Endothelial cell of umbilical vein (primary cell): ENCODE measurements at regions of chr3 and their contacts with region 1.

Region 1: DNA sequence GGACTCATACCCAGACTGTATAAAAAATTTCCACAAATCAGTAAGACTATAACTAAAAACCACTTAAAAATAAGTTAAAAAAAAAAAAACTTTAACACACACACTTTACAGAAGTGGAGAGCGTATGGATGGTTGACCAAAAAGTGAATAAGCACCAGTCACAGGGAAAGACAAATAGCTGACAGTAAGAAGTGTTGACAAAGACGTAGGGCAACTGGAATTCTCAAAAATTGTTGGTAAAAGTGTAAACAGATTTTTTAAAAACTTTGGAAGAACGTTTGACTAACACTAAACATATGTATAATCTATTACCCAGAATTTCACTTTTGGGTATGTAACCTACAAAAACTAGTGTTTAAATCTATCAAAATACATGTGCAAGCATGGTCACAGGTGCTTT is 73.7 kb downstream of the TMEM212 start:
- DNase-seq: no peak
- H3K4me3 ChIP-seq: no peak overlapping the region
- H3K27ac ChIP-seq: no peak overlapping the region
- H3K4me1 ChIP-seq: no peaks in the 10 kb centered on the region
- H3K27me3 ChIP-seq: no peaks in the 10 kb centered on the region
- CTCF ChIP-seq: no peak
- POLR2A ChIP-seq: no peak

Region 2: GRCh38 chr3:170908235-170909116 is 1008.4 kb before region 1 on chr3 and contains the start of gene EIF5A2:
- CTCF ChIA-PET with region 1: no interaction called
- POLR2A ChIA-PET with region 1: no interaction called
- dilution Hi-C with region 1: no loop called
- intact Hi-C with region 1: no loop called
- DNase-seq: peak; percentile 92
- H3K4me3 ChIP-seq: peak within 1 kb of the TSS; percentile 64 to 69 (median 68)
- H3K27ac ChIP-seq: peak within 1 kb of the TSS; percentile 22
- H3K4me1 ChIP-seq: peaks cover 12% of the 10 kb centered on the region
- H3K27me3 ChIP-seq: peaks cover 0 to 3% of the 10 kb centered on the region in 2 experiments
- CTCF ChIP-seq: no peak
- POLR2A ChIP-seq: peak; percentile 70
- total RNA-seq, gene EIF5A2: 10.9 and 12.3 TPM in 2 replicates

Region 3: DNA sequence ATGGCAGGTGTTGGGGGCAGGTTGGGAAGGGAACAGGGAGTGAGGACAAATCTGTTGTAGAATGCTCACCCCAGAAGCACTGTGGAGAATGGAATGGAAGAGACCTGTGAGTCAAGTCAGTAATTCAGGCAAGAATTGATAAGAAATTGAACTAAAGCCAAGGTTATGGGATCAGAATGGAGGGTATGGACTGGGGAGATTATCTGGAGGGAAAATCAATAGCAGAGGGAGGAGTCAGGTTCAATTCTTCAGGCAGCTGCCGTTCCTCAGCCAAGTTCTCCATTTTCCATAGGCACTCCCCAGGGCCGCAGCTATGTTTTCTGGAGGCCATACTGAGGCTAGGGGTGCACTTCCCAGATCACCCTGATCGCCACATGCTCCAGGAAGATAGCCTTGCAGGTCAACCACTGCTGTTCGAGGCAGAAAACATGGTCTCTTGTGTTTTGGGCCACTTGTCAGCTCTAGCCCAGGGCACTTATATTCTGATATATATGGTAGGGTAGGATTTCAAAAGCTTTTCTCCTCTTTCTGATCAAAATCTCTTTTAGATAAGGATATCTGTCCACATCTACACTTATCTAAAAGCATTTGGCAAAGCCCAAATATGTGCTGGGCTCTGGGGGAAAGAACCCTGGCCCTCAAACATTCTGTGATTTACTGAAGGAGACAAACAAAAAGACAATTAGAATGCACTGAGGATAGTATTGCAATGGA is 18.5 kb after region 1 on chr3:
- CTCF ChIA-PET with region 1: no interaction called
- POLR2A ChIA-PET with region 1: no interaction called
- dilution Hi-C with region 1: no loop called
- intact Hi-C with region 1: loop called (anchors 1 kb)
- DNase-seq: no peak
- H3K4me3 ChIP-seq: no peak overlapping the region
- H3K27ac ChIP-seq: no peak overlapping the region
- H3K4me1 ChIP-seq: no peaks in the 10 kb centered on the region
- H3K27me3 ChIP-seq: no peaks in the 10 kb centered on the region
- CTCF ChIP-seq: no peak
- POLR2A ChIP-seq: no peak